ENCODE measurements at regions of chr5 and their contacts with region 1.

Region 1: DNA sequence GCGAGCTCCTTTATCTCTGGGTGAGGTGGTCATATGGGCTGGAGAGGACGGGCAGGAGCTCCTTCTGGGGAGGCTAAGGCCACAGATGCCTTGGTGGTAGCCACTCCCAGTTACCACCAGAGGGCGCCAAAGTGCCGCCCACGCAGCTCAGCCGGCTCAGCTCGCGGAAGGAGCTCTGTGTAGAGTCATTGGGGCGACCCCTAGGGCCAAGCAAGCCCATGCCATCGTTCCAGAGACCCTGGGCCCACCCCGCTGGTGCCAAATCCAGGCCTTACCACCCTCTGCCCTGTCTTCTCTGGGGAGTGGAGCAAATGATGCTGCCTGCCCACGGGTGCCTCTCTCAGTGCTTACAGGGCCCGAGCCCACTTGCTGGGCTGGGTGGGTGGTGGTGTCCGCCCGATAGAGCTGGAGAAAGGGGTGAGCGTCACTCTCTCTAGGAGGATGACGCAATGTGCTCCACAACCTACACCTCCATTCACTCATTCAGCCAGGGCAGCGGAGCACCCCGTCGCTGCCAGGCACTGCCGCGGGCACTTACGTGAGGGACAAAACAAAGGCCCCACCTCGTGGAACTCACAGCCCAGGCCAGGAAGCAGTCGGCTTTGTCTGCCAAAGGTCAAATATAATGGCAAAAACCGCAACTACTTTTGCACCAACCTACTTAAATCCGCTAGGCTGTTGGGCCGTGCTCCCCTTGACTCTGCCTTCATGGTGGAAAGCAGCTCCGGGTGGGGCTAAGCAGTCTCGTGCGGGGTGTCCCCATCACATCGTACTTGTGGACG is 13.8 kb downstream of the TSPAN17 start:
- DNase-seq: peak; percentile 83
- H3K4me3 Mint-ChIP-seq: no peak overlapping the region
- H3K27ac Mint-ChIP-seq: no peak overlapping the region
- H3K4me1 Mint-ChIP-seq: peaks cover 33% of the 10 kb centered on the region
- H3K27me3 Mint-ChIP-seq: peaks cover 36% of the 10 kb centered on the region

Region 2: GRCh38 chr5:176415952-176416924 is 244.8 kb before region 1 on chr5 and contains the start of gene CLTB:
- CTCF ChIA-PET with region 1: interaction called, 12 read pairs
- DNase-seq: peak; percentile 90
- H3K4me3 Mint-ChIP-seq: peak within 1 kb of the TSS; percentile 80
- H3K27ac Mint-ChIP-seq: peak within 1 kb of the TSS; percentile 81
- H3K4me1 Mint-ChIP-seq: peaks cover 38% of the 10 kb centered on the region
- H3K27me3 Mint-ChIP-seq: peaks cover 21% of the 10 kb centered on the region

Region 3: DNA sequence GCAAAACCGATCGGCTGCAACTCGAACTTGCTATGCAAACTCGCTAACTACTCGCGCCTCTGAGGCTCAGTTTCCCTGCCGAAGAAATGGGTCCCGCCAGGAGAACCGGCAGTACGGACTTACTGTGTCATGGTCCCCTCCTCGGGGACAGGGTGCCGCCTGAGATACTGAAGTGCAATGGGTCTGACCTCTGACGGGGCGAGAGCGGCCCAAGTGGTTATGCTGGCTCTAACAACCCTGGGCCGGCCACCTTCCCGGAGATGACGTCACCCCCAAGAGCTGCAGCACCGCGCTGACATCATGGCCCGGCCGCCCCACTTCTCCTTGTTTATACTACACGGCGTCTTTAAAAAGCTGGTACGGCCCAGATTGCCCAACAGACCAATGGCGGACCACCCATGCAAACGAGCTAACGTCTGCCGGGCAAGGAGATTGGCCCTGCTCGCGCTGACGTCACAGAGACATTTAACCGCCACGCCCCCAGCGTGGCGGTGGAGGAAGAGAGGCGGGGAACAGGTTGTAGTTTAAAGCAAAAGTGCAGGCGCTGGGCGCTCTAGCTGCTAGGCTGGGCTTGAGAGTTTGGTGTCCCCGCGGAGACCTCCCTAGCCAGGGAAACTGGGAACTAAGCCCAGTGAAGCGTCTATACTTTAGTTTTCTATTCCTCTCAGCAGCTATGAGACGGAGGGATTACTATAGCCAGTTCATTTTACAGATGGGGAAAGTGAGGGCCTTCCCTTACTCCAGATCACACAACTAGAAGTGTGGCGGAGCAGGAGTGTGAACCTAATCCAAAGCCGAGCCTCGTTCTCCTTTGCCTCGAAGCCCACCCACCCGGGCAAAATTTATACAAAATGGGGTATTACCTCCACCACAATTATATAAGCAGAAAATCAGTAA is 123.2 kb before region 1 on chr5:
- CTCF ChIA-PET with region 1: no interaction called
- DNase-seq: peak; percentile 99
- H3K4me3 Mint-ChIP-seq: peak overlapping the region; percentile 96
- H3K27ac Mint-ChIP-seq: peak overlapping the region; percentile 100
- H3K4me1 Mint-ChIP-seq: peaks cover 70% of the 10 kb centered on the region
- H3K27me3 Mint-ChIP-seq: no peaks in the 10 kb centered on the region

Region 4: GRCh38 chr5:176614805-176615478 is 46.1 kb before region 1 on chr5:
- CTCF ChIA-PET with region 1: no interaction called
- DNase-seq: no peak
- H3K4me3 Mint-ChIP-seq: no peak overlapping the region
- H3K27ac Mint-ChIP-seq: no peak overlapping the region
- H3K4me1 Mint-ChIP-seq: peaks cover 20% of the 10 kb centered on the region
- H3K27me3 Mint-ChIP-seq: peaks cover 90% of the 10 kb centered on the region

Region 5: GRCh38 chr5:176675675-176676360 is 14.8 kb after region 1 on chr5:
- CTCF ChIA-PET with region 1: interaction called, 16 read pairs
- DNase-seq: no peak
- H3K4me3 Mint-ChIP-seq: no peak overlapping the region
- H3K27ac Mint-ChIP-seq: no peak overlapping the region
- H3K4me1 Mint-ChIP-seq: no peaks in the 10 kb centered on the region
- H3K27me3 Mint-ChIP-seq: peaks cover 67% of the 10 kb centered on the region

Region 6: DNA sequence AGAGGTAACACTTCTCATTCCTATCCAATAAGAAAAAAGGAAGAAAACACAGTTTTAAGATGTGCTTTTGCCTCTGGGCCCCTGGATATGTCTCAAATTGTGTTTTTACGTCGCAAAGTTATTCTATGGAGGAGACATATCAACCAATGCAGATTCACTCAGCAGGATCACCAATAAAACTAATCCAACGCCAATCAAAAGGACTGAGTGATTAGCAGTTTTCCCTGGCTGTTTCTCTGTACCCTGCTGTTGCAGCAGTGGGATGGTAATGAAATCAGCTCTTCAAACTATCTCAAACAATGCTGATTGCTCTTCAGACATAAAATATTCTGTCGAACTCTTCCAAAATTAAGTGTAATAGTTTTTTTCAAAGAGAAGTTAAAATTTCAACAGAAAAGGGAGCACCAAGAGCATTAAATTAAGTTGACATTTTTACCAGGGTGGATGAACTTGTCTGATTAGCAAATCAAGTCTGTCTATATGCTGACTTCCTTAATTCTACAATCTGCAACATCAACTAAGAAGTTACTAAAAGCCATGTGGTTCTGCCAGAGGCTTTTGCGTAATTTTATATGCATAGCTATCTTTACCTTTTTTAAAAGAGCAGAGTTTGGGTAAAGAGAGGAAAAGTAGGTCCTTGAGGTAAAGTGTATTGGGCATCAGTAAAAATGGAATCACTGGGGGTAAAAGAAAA is 247.8 kb after region 1 on chr5:
- CTCF ChIA-PET with region 1: interaction called, 10 read pairs
- DNase-seq: no peak
- H3K4me3 Mint-ChIP-seq: no peak overlapping the region
- H3K27ac Mint-ChIP-seq: no peak overlapping the region
- H3K4me1 Mint-ChIP-seq: no peaks in the 10 kb centered on the region
- H3K27me3 Mint-ChIP-seq: no peaks in the 10 kb centered on the region

Region 7: GRCh38 chr5:176959051-176959450 is 298.0 kb after region 1 on chr5:
- CTCF ChIA-PET with region 1: interaction called, 33 read pairs
- DNase-seq: no peak
- H3K4me3 Mint-ChIP-seq: no peak overlapping the region
- H3K27ac Mint-ChIP-seq: no peak overlapping the region
- H3K4me1 Mint-ChIP-seq: peaks cover 2% of the 10 kb centered on the region
- H3K27me3 Mint-ChIP-seq: no peaks in the 10 kb centered on the region

Measured in activated naive CD4-positive, alpha-beta T cell treated with anti-CD3 and anti-CD28 coated beads, Interleukin-2, amount 10 ng/mL, durations not matched to agents 7 days and 5 days (primary cell).